ENCODE measurements at regions of chr16 and their contacts with region 1.

Region 1: DNA sequence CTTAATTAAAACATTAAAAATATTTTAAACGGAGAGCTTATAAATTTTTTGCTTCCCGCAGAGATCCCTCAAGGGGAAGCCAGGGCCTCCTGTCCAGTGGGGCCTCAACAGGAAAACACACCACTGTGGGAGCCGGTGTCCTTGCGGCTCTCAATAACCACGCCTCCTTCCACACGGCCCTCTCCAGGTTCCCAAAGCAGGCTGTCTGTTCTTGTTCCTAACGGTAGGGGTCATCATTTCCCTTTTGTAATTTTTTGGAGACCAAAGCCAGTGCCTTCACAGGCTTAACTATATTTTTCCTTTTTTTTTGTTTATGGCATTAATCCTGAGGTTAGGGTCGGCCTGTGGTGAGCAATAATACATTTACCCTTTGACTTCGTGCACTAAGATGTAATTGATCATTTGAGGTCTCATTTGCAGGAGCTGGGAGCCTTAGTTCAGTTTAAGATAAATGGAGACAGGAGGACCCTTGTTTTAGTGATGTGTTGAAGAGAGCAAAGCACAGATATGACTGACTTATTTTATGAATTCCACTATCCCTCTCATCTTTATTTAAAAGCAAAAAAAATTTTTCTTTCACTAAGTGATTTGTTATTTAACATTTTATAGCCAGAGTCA is 77.5 kb upstream of the N4BP1 start:
- DNase-seq: peak in 5 of 9 donors; percentile 0 to 25 (median 15)
- ATAC-seq: peak; percentile 49
- H3K4me3 ChIP-seq: no peak overlapping the region
- H3K4me3 Mint-ChIP-seq: no peak overlapping the region
- H3K27ac ChIP-seq: no peak overlapping the region
- H3K27ac Mint-ChIP-seq: no peak overlapping the region
- H3K4me1 ChIP-seq: no peaks in the 10 kb centered on the region
- H3K4me1 Mint-ChIP-seq: peaks cover 5 to 15% (median 9%) of the 10 kb centered on the region in 7 donors
- H3K27me3 ChIP-seq: no peaks in the 10 kb centered on the region
- H3K27me3 Mint-ChIP-seq: peaks cover 8 to 30% (median 27%) of the 10 kb centered on the region in 5 donors

Region 2: DNA sequence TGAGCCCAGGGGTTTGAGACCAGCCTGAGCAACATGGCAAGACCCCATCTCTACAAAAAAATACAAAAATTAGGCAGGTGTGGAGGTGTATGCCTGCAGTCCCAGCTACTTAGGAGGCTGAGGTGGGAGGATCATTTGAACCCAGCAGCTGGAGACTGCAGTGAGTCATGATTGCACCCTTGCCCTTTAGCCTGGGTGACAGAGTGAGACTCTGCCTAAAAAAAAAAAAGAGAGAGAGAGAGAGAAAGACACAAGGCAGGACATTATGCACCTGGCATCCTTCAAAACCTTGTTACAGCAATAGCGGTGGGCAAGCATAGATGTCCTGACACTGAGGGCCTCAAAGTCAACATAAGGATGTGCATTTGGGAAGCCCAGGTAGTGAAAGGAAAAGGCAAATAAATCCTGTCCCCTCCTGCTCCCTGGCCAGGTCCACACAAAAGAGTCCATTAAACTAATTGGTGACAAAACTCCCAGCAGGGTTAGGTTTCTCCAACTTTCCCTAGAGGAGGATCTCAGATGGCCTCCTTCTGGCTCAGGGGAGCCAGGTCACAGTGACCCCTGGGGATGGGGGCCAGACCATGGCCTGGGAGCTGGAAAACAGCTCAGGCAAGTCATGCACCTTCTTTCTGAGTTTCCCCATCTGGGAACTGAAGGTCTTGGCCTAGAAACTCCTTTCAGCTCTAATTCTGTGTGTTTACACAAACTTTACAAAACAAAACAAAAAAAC is 282.2 kb before region 1 on chr16:
- CTCF ChIA-PET with region 1: no interaction called
- POLR2A ChIA-PET with region 1: no interaction called
- intact Hi-C with region 1: no loop called
- DNase-seq: no peak
- ATAC-seq: no peak
- H3K4me3 ChIP-seq: no peak overlapping the region
- H3K4me3 Mint-ChIP-seq: no peak overlapping the region
- H3K27ac ChIP-seq: no peak overlapping the region
- H3K27ac Mint-ChIP-seq: no peak overlapping the region
- H3K4me1 ChIP-seq: no peaks in the 10 kb centered on the region
- H3K4me1 Mint-ChIP-seq: peaks cover 0 to 13% (median 4%) of the 10 kb centered on the region in 7 donors
- H3K27me3 ChIP-seq: no peaks in the 10 kb centered on the region
- H3K27me3 Mint-ChIP-seq: peaks cover 0 to 7% (median 0%) of the 10 kb centered on the region in 5 donors

Region 3: DNA sequence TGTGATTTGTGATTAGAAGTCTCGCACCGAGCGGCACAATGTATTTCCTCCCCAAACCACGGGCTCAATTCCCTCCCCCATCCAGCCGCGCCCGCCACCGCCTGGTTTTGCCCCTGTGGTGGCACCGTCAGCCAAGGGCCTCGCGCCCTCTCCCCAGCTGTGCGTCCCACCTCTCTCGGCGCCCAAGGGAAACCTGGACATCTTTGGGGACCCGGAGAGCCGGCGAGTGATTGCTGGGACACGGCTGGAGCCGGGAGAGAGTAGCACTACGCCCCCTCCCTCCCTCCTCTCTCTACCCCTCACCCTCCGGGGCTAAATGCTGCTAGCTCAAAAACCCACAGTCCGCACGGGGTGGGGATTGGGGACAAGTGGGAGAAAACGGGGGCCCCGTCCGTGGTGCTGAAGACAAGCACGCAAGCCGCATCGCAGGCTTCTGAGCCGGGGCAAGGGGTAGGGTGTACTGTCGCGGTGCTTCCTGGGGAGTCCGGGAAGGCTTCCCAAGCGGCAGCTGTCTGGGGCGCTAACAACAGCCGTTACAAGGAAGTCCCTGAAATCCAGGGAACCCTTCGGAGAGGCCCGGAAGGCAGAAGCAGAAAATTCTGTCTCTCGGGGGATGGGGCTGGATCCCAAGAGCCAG is 592.7 kb after region 1 on chr16:
- CTCF ChIA-PET with region 1: no interaction called
- POLR2A ChIA-PET with region 1: no interaction called
- intact Hi-C with region 1: no loop called
- DNase-seq: no peak
- ATAC-seq: no peak
- H3K4me3 ChIP-seq: no peak overlapping the region
- H3K4me3 Mint-ChIP-seq: peak overlapping the region in 8 of 10 donors; percentile 36 to 77 (median 64)
- H3K27ac ChIP-seq: no peak overlapping the region
- H3K27ac Mint-ChIP-seq: no peak overlapping the region
- H3K4me1 ChIP-seq: no peaks in the 10 kb centered on the region
- H3K4me1 Mint-ChIP-seq: peaks cover 8 to 29% (median 13%) of the 10 kb centered on the region in 7 donors
- H3K27me3 ChIP-seq: no peaks in the 10 kb centered on the region
- H3K27me3 Mint-ChIP-seq: peaks cover 71 to 85% (median 82%) of the 10 kb centered on the region in 5 donors

Region 4: DNA sequence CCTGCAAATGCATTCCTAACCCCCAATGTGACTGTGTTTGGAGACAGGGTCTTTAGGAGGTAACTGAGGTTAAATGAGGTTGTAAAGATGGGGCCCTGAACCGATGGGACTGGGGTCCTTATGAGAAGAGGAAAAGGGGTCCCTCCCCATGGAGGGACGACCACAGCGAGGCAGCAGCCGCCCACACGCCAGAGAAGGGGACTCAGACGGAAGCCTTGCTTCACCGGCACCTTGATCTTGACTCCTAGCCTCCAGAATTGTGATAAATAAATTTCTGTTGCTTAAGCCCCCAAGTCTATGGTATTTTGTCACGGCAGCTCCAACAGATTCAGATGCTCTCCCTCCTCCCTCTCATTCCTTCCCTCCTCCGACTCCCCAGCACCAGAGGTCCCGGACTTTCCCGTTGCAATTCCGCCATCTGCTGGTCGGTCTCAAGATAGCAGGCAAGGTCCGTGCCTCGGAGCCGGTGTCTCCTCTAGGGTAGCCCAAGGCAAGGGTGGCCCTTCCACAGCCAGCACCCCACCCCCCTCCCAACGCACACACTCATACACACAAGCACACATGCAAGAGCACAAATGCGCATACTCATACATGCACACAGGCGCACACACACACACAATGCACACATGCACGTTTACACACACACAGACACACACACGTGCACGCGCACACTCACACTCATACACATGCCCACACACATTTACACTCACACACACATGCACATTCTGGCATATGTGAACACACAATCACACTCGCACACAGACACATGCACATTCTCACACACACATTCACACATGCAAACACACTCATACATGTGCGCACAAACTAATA is 663.0 kb after region 1 on chr16:
- CTCF ChIA-PET with region 1: no interaction called
- POLR2A ChIA-PET with region 1: no interaction called
- intact Hi-C with region 1: loop called in 1 of 2 experiments (anchors 1 kb)
- DNase-seq: peak in 5 of 9 donors; percentile 8 to 59 (median 22)
- ATAC-seq: peak; percentile 41
- H3K4me3 ChIP-seq: no peak overlapping the region
- H3K4me3 Mint-ChIP-seq: no peak overlapping the region
- H3K27ac ChIP-seq: no peak overlapping the region
- H3K27ac Mint-ChIP-seq: no peak overlapping the region
- H3K4me1 ChIP-seq: no peaks in the 10 kb centered on the region
- H3K4me1 Mint-ChIP-seq: peaks cover 0 to 7% (median 4%) of the 10 kb centered on the region in 7 donors
- H3K27me3 ChIP-seq: no peaks in the 10 kb centered on the region
- H3K27me3 Mint-ChIP-seq: peaks cover 2 to 38% (median 26%) of the 10 kb centered on the region in 5 donors